ENCODE measurements at regions of chr1 and their contacts with region 1.

Region 1: GRCh38 chr1:89454845-89455521 is 69.6 kb upstream of the LRRC8B start:
- DNase-seq: peak; percentile 51
- H3K4me3 Mint-ChIP-seq: no peak overlapping the region
- H3K27ac Mint-ChIP-seq: no peak overlapping the region
- H3K4me1 Mint-ChIP-seq: peaks cover 21% of the 10 kb centered on the region
- H3K27me3 Mint-ChIP-seq: peaks cover 25% of the 10 kb centered on the region

Region 2: DNA sequence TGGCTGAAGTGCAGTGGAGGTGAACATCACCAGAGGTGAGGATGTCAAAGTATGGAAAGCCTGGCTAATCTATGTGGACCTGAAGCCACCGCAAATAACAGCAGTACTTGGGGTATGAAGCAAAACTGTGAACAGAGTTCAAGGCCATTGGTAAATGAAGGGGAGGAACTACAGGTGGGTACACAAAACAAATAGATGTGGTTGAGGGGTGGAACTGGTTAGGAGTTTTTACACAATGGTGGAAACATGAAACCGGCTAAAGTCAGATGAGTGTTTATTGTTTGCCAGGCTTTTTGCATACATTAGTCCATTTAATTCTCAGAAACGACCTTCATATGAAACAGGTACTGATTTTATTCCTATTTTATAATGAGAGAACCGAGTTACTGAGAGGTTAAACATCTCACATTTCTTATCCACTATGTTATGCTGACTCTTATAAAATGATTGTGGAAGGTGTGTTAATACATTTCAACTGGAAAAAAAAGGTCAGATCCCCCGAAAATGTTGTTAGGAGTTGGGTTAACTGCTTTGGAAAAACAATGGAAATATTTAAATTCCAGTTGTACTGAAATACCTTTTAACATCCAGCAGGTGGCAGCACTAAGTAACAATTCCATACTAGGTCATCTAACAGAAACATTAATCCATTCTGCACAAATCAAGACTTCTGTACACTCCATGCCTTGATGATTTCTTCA is 519.3 kb before region 1 on chr1:
- intact Hi-C with region 1: loop called (anchors 1 kb)
- DNase-seq: no peak
- H3K4me3 Mint-ChIP-seq: no peak overlapping the region
- H3K27ac Mint-ChIP-seq: no peak overlapping the region
- H3K4me1 Mint-ChIP-seq: no peaks in the 10 kb centered on the region
- H3K27me3 Mint-ChIP-seq: no peaks in the 10 kb centered on the region

Region 3: DNA sequence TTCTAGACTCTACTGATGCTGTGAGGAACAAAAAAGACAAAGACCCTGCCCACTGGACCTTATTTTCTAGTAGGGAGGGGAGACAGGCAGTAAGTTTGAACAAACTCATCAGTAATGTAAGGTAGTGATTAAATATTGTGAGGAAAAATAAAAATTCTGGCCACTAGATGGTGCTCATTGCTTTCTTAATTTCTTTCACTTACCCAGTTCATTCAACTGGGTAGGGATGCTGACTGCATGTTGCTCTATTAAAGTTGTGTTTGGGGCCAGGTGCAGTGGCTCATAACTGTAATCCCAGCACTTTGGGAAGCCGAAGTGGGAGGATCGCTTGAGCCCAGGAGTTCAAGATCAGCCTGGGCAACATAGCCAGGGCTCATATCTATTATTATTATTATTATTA is 456.3 kb before region 1 on chr1:
- intact Hi-C with region 1: loop called (anchors 1 kb)
- DNase-seq: no peak
- H3K4me3 Mint-ChIP-seq: no peak overlapping the region
- H3K27ac Mint-ChIP-seq: no peak overlapping the region
- H3K4me1 Mint-ChIP-seq: peaks cover 25% of the 10 kb centered on the region
- H3K27me3 Mint-ChIP-seq: no peaks in the 10 kb centered on the region

Region 4: DNA sequence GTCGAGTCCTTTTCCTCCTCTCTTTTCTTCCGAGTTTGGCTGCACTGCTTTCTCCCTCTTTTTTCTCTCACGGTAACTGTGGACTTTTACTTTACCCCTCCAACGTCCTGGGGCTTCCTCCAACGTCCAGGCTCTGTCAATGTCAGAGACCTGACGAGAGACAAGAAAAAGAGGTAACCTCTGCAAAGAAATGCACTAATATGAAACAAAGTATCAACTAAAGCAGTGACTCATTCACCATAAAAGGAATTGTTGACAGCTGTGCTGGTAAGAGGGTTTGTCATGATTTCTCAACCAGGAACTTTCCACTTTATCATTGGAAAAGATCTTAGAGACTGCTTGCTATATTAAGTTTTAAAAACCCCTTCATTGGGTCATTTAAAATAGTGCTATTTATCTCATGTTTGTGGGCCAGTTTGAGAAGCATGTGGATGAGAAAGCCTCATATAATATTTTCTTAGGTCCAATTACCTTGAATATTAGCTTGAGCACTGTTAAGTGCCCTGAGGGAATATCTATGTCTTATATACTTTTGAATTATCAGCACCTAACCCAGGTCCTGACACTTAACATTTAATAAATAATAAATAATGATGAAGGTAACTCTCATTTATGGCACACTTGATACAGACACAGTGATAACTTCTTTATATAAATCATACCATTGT is 328.9 kb before region 1 on chr1 and contains the start of gene GBP2:
- intact Hi-C with region 1: loop called (anchors 1 kb)
- DNase-seq: peak; percentile 32
- H3K4me3 Mint-ChIP-seq: peak within 1 kb of the TSS; percentile 95
- H3K27ac Mint-ChIP-seq: peak within 1 kb of the TSS; percentile 97
- H3K4me1 Mint-ChIP-seq: peaks cover 65% of the 10 kb centered on the region
- H3K27me3 Mint-ChIP-seq: no peaks in the 10 kb centered on the region
- total RNA-seq, gene GBP2: 225 and 229 TPM in 2 replicates

Region 5: GRCh38 chr1:89274411-89274857 is 180.5 kb before region 1 on chr1:
- intact Hi-C with region 1: loop called (anchors 1 kb)
- DNase-seq: peak; percentile 43
- H3K4me3 Mint-ChIP-seq: peak overlapping the region; percentile 75
- H3K27ac Mint-ChIP-seq: peak overlapping the region; percentile 97
- H3K4me1 Mint-ChIP-seq: peaks cover 66% of the 10 kb centered on the region
- H3K27me3 Mint-ChIP-seq: no peaks in the 10 kb centered on the region

Region 6: GRCh38 chr1:89347296-89347695 is 107.7 kb before region 1 on chr1:
- intact Hi-C with region 1: no loop called
- DNase-seq: no peak
- H3K4me3 Mint-ChIP-seq: no peak overlapping the region
- H3K27ac Mint-ChIP-seq: no peak overlapping the region
- H3K4me1 Mint-ChIP-seq: peaks cover 21% of the 10 kb centered on the region
- H3K27me3 Mint-ChIP-seq: no peaks in the 10 kb centered on the region

Region 7: GRCh38 chr1:89358287-89358893 is 96.6 kb before region 1 on chr1:
- intact Hi-C with region 1: loop called (anchors 1 kb)
- DNase-seq: peak; percentile 76
- H3K4me3 Mint-ChIP-seq: peak overlapping the region; percentile 73
- H3K27ac Mint-ChIP-seq: peak overlapping the region; percentile 80
- H3K4me1 Mint-ChIP-seq: peaks cover 69% of the 10 kb centered on the region
- H3K27me3 Mint-ChIP-seq: no peaks in the 10 kb centered on the region

Region 8: GRCh38 chr1:89739013-89739843 is 284.2 kb after region 1 on chr1:
- intact Hi-C with region 1: no loop called
- DNase-seq: no peak
- H3K4me3 Mint-ChIP-seq: peak overlapping the region; percentile 72
- H3K27ac Mint-ChIP-seq: peak overlapping the region; percentile 95
- H3K4me1 Mint-ChIP-seq: peaks cover 76% of the 10 kb centered on the region
- H3K27me3 Mint-ChIP-seq: peaks cover 3% of the 10 kb centered on the region

Region 9: GRCh38 chr1:89994805-89995597 is 540.0 kb after region 1 on chr1 and contains the start of gene ZNF326:
- intact Hi-C with region 1: no loop called
- DNase-seq: peak; percentile 93
- H3K4me3 Mint-ChIP-seq: peak within 1 kb of the TSS; percentile 99
- H3K27ac Mint-ChIP-seq: peak within 1 kb of the TSS; percentile 97
- H3K4me1 Mint-ChIP-seq: peaks cover 46% of the 10 kb centered on the region
- H3K27me3 Mint-ChIP-seq: no peaks in the 10 kb centered on the region
- total RNA-seq, gene ZNF326: 37.3 and 39.1 TPM in 2 replicates